ENCODE measurements at regions of chr12 and their contacts with region 1.

Region 1: GRCh38 chr12:53675651-53676453 is at the start of gene ATP5MC2:
- DNase-seq: peak; percentile 74
- H3K4me3 ChIP-seq: peak within 1 kb of the TSS; percentile 67 to 89 (median 72)
- H3K27ac ChIP-seq: peak within 1 kb of the TSS; percentile 89 to 96 (median 94)
- H3K4me1 ChIP-seq: peaks cover 17 to 58% (median 27%) of the 10 kb centered on the region in 3 donors
- H3K27me3 ChIP-seq: no peaks in the 10 kb centered on the region
- CTCF ChIP-seq: peak; percentile 94 to 100 (median 100)
- POLR2A ChIP-seq: peak in 3 of 4 donors; percentile 51 to 78 (median 54)
- total RNA-seq, gene ATP5MC2: 240 to 303 (median 268) TPM

Region 2: GRCh38 chr12:52924764-52925716 is 750.8 kb before region 1 on chr12:
- intact Hi-C with region 1: no loop called
- DNase-seq: no peak
- H3K4me3 ChIP-seq: no peak overlapping the region
- H3K27ac ChIP-seq: peak overlapping the region in 1 of 4 donors; percentile 60
- H3K4me1 ChIP-seq: peaks cover 0 to 20% (median 9%) of the 10 kb centered on the region in 3 donors
- H3K27me3 ChIP-seq: no peaks in the 10 kb centered on the region
- CTCF ChIP-seq: no peak
- POLR2A ChIP-seq: no peak

Region 3: GRCh38 chr12:53543539-53543938 is 132.3 kb before region 1 on chr12:
- intact Hi-C with region 1: loop called (anchors 5 kb)
- DNase-seq: no peak
- H3K4me3 ChIP-seq: no peak overlapping the region
- H3K27ac ChIP-seq: peak overlapping the region; percentile 32 to 70 (median 55)
- H3K4me1 ChIP-seq: peaks cover under 1 to 43% (median 20%) of the 10 kb centered on the region in 3 donors
- H3K27me3 ChIP-seq: no peaks in the 10 kb centered on the region
- CTCF ChIP-seq: peak; percentile 31 to 91 (median 87)
- POLR2A ChIP-seq: no peak

Region 4: DNA sequence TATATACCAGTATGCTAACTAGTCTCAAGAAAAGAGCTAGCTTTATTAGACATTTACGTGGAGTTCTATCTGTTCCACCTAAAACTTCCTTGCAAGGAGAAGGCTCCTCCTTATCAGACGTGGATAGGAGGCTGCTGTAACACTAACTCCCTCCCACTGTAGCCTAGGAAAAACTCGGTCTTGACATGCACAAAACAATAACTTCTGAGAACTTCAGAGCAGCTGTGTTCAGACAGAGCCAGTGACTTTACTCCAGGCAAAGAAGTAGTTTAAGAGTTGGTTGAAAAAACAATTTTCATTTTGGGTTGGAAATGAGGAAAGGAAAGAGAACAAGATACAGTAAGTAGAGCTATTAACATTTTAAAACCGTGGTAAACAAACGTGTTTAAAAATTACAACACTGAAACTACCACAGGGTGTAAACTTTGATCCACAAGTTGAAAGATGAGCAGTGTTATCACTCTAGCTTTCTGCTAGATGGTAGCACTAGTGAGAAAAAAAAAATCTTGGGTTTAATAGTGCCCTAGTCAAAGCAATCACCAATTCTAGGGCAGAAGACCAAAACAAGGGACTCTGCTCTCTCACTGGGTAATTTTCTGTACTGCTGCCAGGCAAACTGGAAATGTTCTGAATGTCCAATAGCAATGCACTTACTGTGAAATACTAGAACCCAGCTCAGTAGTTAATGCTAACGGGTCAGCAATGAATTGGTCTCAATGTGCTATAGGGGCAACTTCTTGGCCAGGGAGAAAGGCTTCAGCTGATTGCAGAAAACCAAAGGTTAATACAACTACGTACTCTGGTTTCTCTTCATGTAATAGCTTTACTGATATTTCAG is 52.1 kb before region 1 on chr12:
- intact Hi-C with region 1: loop called (anchors 5 kb)
- DNase-seq: no peak
- H3K4me3 ChIP-seq: peak overlapping the region; percentile 59 to 91 (median 71)
- H3K27ac ChIP-seq: peak overlapping the region; percentile 90 to 97 (median 94)
- H3K4me1 ChIP-seq: peaks cover 16 to 70% (median 24%) of the 10 kb centered on the region in 3 donors
- H3K27me3 ChIP-seq: no peaks in the 10 kb centered on the region
- CTCF ChIP-seq: no peak
- POLR2A ChIP-seq: peak in 2 of 4 donors; percentile 32 to 34

Region 5: DNA sequence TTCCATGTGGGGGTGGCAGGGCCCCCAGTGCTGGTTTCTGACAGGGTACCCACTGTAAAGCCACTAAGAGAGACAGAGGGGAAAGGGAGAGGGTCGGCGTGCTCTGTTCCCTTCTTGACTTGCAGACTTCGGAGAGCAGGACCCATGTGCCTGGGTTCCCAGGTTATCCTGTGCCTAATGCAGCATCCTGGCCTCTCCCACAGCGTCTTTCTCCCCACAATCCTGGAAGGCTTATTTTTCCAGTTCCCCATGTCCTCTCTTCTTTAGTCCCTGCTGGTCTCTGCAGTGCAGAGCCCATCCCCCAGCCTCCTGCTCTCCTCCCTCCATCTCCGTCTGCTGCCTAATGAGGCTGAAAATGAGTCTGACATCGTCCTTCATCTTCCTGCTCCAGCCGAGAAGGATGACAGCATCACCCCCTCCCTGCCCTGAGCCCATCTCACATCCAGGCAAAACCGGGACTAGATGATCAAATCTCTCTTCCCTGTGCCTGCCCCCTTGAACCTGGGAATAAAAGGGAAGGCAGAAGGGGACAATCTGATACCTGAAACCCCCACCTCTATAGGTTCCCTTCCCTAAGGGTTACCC is 36.3 kb after region 1 on chr12:
- intact Hi-C with region 1: no loop called
- DNase-seq: no peak
- H3K4me3 ChIP-seq: no peak overlapping the region
- H3K27ac ChIP-seq: no peak overlapping the region
- H3K4me1 ChIP-seq: no peaks in the 10 kb centered on the region
- H3K27me3 ChIP-seq: peaks cover 0 to 11% (median 0%) of the 10 kb centered on the region in 4 donors
- CTCF ChIP-seq: no peak
- POLR2A ChIP-seq: no peak